ENCODE measurements at regions of chr2 and their contacts with region 1.

Region 1: GRCh38 chr2:162221064-162221463 is 22.2 kb downstream of the FAP start:
- DNase-seq: peak; percentile 60 to 68
- H3K4me3 ChIP-seq: no peak overlapping the region
- H3K27ac ChIP-seq: no peak overlapping the region
- H3K4me1 ChIP-seq: no peaks in the 10 kb centered on the region
- H3K27me3 ChIP-seq: no peaks in the 10 kb centered on the region
- CTCF ChIP-seq: peak; percentile 60 to 86 (median 66)
- POLR2A ChIP-seq: no peak

Region 2: DNA sequence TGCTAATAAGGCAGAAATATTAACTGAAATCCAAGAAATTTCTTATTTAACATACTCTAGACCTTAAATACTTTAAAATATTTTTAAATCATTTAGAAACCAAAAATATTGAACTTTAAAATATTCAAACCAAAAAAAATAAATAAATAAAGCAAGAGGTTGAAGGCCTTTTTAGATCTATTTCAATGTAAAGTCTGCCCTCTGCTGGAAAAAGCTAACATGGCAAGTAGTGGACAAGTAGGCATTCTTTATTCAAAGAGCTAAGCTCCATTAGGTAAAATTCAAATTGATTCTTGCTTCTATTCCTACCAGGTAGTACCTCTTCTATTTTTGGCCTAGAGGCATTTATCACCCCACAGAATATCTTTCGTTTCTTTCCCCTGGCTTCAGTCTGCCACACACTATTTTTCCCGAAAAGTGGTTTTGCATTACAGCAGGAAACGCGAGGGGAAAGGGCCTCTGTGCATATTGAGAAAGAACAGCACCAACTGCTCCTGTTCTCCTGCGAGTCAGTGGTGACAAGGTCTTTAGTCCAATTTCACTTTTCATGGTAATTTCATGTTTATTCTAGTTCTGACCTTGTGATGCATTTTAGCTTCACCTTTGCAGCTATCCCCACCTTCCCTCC is 77.0 kb after region 1 on chr2:
- intact Hi-C with region 1: loop called (anchors 5 kb)
- DNase-seq: peak; percentile 53 to 58
- H3K4me3 ChIP-seq: no peak overlapping the region
- H3K27ac ChIP-seq: no peak overlapping the region
- H3K4me1 ChIP-seq: no peaks in the 10 kb centered on the region
- H3K27me3 ChIP-seq: no peaks in the 10 kb centered on the region
- CTCF ChIP-seq: peak; percentile 52 to 87 (median 75)
- POLR2A ChIP-seq: no peak